GM12878 (cell line): ENCODE measurements at regions of chr2 and their contacts with region 1.

Region 1: DNA sequence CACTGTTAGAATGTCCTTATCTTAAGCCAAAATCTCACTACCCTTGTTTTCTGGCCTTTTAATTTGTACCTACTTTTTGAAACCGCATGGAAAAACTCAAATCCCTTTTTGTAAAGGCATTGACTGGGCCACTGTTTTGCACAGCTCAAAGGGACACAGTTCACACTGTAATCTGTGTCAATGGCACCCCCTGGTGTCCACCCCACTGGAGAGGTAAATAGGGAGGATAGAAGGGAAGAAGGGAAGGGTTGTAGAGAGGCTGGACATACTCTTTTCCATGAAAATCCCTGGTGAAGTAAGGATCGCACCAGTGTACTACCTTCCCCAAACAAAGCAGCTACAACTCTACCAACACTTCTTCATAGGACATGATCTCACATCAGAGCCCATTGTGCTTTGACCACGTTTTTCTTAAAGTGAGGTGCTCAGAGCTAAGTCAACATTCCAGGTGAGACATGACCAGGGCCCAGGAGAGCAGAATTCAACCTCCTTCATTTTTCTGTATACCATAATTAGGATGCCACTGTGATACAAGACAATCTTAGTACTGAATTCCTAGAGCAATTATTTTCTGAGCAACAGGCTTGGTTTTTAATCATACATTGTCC is 92.4 kb upstream of the RMDN2 start:
- DNase-seq: peak; percentile 68
- ATAC-seq: peak; percentile 92
- H3K4me3 ChIP-seq: no peak overlapping the region
- H3K27ac ChIP-seq: peak overlapping the region; percentile 50
- H3K4me1 ChIP-seq: peaks cover 4% of the 10 kb centered on the region
- H3K27me3 ChIP-seq: no peaks in the 10 kb centered on the region
- CTCF ChIP-seq: peak; percentile 74 to 88 (median 84)
- EP300 ChIP-seq: no peak
- POLR2A ChIP-seq: no peak
- RAD21 ChIP-seq: peak; percentile 100

Region 2: GRCh38 chr2:37287966-37288365 is 544.7 kb before region 1 on chr2:
- CTCF ChIA-PET with region 1: no interaction called
- POLR2A ChIA-PET with region 1: no interaction called
- RAD21 ChIA-PET with region 1: no interaction called
- SMC1A ChIA-PET with region 1: no interaction called
- in situ Hi-C with region 1: no loop called
- intact Hi-C with region 1: loop called (anchors 10 kb)
- DNase-seq: peak; percentile 7
- ATAC-seq: peak; percentile 78
- H3K4me3 ChIP-seq: no peak overlapping the region
- H3K27ac ChIP-seq: no peak overlapping the region
- H3K4me1 ChIP-seq: no peaks in the 10 kb centered on the region
- H3K27me3 ChIP-seq: no peaks in the 10 kb centered on the region; a peak in 1 of 4 replicates
- CTCF ChIP-seq: peak; percentile 28 to 56 (median 30); a peak in 4 of 6 replicates
- EP300 ChIP-seq: no peak
- POLR2A ChIP-seq: no peak
- RAD21 ChIP-seq: peak; percentile 70

Region 3: GRCh38 chr2:37549598-37549997 is 283.1 kb before region 1 on chr2:
- CTCF ChIA-PET with region 1: interaction called, 6 read pairs
- POLR2A ChIA-PET with region 1: no interaction called
- RAD21 ChIA-PET with region 1: interaction called, 11 read pairs
- SMC1A ChIA-PET with region 1: interaction called, 10 read pairs
- in situ Hi-C with region 1: no loop called
- intact Hi-C with region 1: loop called (anchors 10 kb)
- DNase-seq: no peak
- ATAC-seq: peak; percentile 87
- H3K4me3 ChIP-seq: peak overlapping the region; percentile 4; the same call in 1 of the 2 replicates
- H3K27ac ChIP-seq: peak overlapping the region; percentile 95
- H3K4me1 ChIP-seq: peaks cover 36% of the 10 kb centered on the region
- H3K27me3 ChIP-seq: no peaks in the 10 kb centered on the region
- CTCF ChIP-seq: no peak
- EP300 ChIP-seq: no peak
- POLR2A ChIP-seq: no peak
- RAD21 ChIP-seq: no peak

Region 4: DNA sequence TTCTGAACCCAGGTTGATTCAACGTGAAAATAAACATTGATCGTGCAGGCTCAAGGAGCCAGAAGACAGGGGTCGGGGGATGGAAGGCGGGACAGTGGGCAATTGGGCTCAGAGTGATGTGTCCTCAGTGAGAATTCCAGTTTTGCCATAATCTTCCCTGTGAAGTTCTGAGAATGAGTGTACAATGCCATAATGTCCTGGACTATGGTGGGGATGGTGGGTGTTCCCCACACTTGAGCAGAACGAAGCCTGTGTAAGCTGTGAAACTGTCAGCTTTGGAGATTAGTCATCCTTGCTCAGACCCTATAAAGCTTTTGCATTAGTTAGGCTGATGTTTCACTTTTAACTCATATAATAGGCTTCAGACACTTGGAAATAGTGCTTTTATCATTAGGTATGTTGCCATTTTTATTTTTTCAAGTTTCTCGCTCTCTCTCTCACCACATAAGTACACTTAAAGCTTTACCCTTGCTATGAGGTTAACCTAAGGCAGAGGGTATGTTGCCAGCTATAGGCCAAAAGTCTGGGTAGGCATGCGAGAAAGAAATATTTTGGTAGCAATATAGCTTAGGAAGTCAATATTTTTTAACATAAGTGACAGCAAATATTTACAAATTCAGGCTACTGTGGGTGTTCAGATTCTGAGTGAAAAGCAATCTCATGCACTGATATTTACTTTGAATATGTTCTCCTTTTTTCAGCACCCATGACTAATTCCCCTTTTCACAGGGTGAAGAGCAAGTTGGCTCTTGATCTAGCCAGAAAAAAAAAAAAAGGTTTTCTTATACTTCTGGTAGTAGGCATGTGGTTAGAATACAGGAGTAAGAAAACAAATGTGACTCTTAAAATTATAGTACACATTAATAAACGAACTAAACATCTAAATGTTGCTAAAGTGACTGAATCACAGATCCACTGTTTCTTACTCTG is 208.5 kb before region 1 on chr2:
- CTCF ChIA-PET with region 1: interaction called, 6 read pairs
- POLR2A ChIA-PET with region 1: no interaction called
- RAD21 ChIA-PET with region 1: interaction called, 16 read pairs
- SMC1A ChIA-PET with region 1: interaction called, 31 read pairs
- in situ Hi-C with region 1: no loop called
- intact Hi-C with region 1: no loop called
- DNase-seq: peak; percentile 93
- ATAC-seq: peak; percentile 79
- H3K4me3 ChIP-seq: peak overlapping the region; percentile 24; the same call in 1 of the 2 replicates
- H3K27ac ChIP-seq: peak overlapping the region; percentile 97
- H3K4me1 ChIP-seq: peaks cover 54% of the 10 kb centered on the region
- H3K27me3 ChIP-seq: no peaks in the 10 kb centered on the region
- CTCF ChIP-seq: no peak
- EP300 ChIP-seq: peak; percentile 56 to 80
- POLR2A ChIP-seq: no peak
- RAD21 ChIP-seq: peak; percentile 1; the same call in 1 of the 2 replicates

Region 5: DNA sequence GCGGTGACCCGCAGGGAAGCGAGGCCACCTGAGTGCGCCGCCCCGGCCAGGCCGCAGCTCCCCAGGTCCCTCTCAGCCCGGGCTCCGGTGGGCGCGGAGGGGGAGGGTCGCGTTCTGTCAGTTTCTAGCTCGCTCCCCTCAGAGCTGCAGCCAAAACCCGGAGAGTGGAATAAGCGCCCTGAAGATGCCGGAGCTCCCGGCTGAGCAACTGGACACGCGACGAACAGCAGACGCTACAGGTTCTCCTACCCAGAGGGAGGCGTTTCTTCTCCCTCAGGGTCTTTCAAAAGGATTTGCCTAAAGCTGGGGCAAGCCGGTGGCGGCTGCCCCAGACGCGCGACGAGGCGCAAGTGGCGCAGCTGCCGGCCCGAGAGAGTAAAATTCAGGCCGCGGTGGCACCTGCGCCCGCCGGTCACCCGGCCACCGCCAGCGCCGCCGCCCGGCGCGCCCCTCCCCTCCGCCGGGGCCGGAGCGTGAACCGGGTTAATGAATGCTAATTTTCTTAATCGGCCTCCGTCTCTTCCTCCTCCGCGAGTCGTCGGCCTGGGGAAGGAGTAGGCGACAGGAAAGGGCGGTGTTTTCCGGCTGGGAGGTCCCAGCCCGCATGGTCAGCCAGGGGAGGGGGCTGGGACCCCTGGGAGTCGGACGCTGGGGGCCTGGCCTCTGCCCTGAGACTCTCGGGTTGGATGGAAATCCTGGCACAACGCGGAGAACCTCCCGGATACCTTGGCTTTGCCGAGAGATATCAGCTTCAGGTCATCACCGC is 160.4 kb before region 1 on chr2:
- CTCF ChIA-PET with region 1: interaction called, 6 read pairs
- POLR2A ChIA-PET with region 1: no interaction called
- RAD21 ChIA-PET with region 1: interaction called, 6 read pairs
- SMC1A ChIA-PET with region 1: interaction called, 10 read pairs
- in situ Hi-C with region 1: no loop called
- intact Hi-C with region 1: loop called (anchors 2 kb)
- DNase-seq: no peak
- ATAC-seq: peak; percentile 58
- H3K4me3 ChIP-seq: peak overlapping the region; percentile 87
- H3K27ac ChIP-seq: peak overlapping the region; percentile 77
- H3K4me1 ChIP-seq: no peaks in the 10 kb centered on the region; the same call in 1 of the 2 replicates
- H3K27me3 ChIP-seq: no peaks in the 10 kb centered on the region
- CTCF ChIP-seq: no peak
- EP300 ChIP-seq: no peak
- POLR2A ChIP-seq: peak; percentile 51; the same call in 1 of the 2 replicates
- RAD21 ChIP-seq: no peak